WTC11 (cell line): ENCODE measurements at regions of chr7 and their contacts with region 1.

Region 1: GRCh38 chr7:151631968-151632749 is 112.5 kb upstream of the RHEB start:
- DNase-seq: peak; percentile 82
- ATAC-seq: peak; percentile 79
- H3K4me3 Mint-ChIP-seq: peak overlapping the region; percentile 85
- H3K27ac Mint-ChIP-seq: peak overlapping the region; percentile 82
- H3K4me1 Mint-ChIP-seq: peaks cover 38% of the 10 kb centered on the region
- H3K27me3 Mint-ChIP-seq: peaks cover 33% of the 10 kb centered on the region
- CTCF ChIP-seq: no peak

Region 2: DNA sequence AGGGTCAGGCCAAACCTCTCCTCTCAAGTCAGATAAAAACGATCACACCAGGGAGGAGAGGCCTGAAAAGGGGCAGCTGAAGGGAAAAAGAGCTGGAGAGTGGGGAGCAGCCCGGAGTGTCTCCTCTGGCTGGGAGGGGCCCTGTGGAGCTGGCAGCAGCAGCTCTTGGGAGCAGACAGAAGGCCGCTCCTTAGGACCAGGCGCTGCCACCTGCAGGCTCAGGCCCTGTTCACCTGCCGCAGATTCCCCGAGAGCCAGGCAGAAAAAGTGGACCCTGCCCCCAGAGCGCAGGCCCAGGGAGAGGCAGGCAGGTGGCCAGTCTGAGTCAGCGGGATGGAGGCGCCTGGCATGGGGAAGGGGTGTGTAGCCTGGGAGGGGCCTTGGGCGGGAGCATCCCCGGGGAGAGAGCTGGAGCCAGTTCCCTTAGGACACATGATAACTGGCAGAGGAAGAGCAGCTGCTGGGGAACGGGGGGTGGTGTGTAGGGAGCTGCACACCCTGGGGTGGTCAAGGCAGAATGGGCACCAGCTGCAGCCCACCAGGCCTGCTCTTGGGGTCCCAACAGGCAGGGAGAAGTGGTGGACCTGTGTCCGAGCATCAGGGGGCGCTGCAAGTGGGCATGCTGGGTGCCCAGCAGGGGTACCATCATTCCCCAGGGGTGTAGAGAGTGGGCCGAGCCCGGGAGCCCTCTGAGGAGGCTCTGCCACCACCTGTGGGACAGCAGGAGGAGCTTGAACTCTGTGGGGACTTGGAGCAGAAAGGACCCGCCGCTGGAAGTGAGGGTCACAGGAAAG is 64.8 kb after region 1 on chr7:
- CTCF ChIA-PET with region 1: interaction called, 24 read pairs
- POLR2A ChIA-PET with region 1: interaction called, 3 read pairs
- DNase-seq: peak; percentile 52
- ATAC-seq: peak; percentile 76
- H3K4me3 Mint-ChIP-seq: no peak overlapping the region
- H3K27ac Mint-ChIP-seq: no peak overlapping the region
- H3K4me1 Mint-ChIP-seq: peaks cover 28% of the 10 kb centered on the region
- H3K27me3 Mint-ChIP-seq: no peaks in the 10 kb centered on the region
- CTCF ChIP-seq: no peak

Region 3: DNA sequence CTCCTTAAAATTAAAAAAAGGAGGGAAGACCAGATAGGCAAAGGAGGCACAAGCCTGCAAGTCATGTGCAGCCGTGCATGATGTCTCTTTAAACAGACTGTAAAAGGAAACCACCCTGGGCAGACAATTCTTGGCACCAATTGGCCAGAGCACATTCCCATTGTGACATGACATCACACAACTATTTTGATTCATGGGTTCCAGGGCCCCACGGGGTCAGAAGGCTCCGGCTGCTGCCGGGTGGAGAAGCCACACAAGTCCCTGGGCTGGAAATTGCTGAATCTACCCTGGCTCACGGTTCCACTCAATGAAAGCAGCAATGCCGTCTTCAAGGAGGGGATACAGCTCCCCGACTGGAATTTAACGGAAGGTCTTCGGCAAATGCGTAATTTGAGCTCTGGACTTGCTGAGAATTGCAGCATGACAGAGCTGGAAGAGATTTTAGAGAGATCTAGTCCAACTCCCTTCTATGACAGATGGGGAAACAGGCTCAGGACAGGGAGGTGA is 104.3 kb after region 1 on chr7:
- CTCF ChIA-PET with region 1: interaction called, 18 read pairs
- POLR2A ChIA-PET with region 1: no interaction called
- DNase-seq: no peak
- ATAC-seq: peak; percentile 74
- H3K4me3 Mint-ChIP-seq: peak overlapping the region; percentile 25
- H3K27ac Mint-ChIP-seq: no peak overlapping the region
- H3K4me1 Mint-ChIP-seq: peaks cover 24% of the 10 kb centered on the region
- H3K27me3 Mint-ChIP-seq: no peaks in the 10 kb centered on the region; the same call in 1 of the 2 replicates
- CTCF ChIP-seq: no peak

Region 4: DNA sequence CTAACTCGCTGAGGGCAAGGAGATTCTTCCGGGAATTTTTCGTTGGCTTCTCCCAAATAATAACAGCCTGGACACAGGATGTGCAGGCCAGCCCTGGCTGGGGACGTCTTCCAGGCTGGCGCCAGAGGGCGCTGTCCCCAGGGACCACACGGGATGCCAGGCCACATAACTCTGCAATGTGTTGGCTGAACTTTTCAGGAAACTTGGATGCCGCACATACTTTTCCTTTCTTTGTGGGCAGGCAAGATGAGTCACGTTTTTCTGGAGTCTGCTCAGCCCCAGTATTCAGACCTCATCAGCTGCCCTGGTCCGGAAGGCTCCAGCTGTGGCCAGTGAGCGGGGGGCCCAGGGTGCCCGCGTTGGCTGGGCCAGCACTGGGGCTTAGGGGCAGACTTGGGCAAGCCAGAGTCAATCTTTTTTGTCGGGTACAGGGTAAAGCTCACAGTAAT is 122.0 kb after region 1 on chr7:
- CTCF ChIA-PET with region 1: interaction called, 15 read pairs
- POLR2A ChIA-PET with region 1: interaction called, 3 read pairs
- DNase-seq: peak; percentile 85
- ATAC-seq: peak; percentile 96
- H3K4me3 Mint-ChIP-seq: no peak overlapping the region
- H3K27ac Mint-ChIP-seq: peak overlapping the region; percentile 65
- H3K4me1 Mint-ChIP-seq: peaks cover 29% of the 10 kb centered on the region
- H3K27me3 Mint-ChIP-seq: no peaks in the 10 kb centered on the region; the same call in 1 of the 2 replicates
- CTCF ChIP-seq: peak; percentile 91

Region 5: GRCh38 chr7:151759591-151760042 is 127.5 kb after region 1 on chr7:
- CTCF ChIA-PET with region 1: interaction called, 15 read pairs
- POLR2A ChIA-PET with region 1: interaction called, 3 read pairs
- DNase-seq: peak; percentile 78
- ATAC-seq: peak; percentile 79
- H3K4me3 Mint-ChIP-seq: no peak overlapping the region
- H3K27ac Mint-ChIP-seq: no peak overlapping the region
- H3K4me1 Mint-ChIP-seq: peaks cover 35% of the 10 kb centered on the region
- H3K27me3 Mint-ChIP-seq: peaks cover 8% of the 10 kb centered on the region
- CTCF ChIP-seq: peak; percentile 88